ENCODE measurements at regions of chr10 and their contacts with region 1.

Region 1: GRCh38 chr10:84715911-84716310 is 387.5 kb downstream of the CCSER2 start:
- DNase-seq: peak; percentile 61 to 70 (median 64)
- ATAC-seq: peak; percentile 99
- H3K4me3 ChIP-seq: no peak overlapping the region
- H3K27ac ChIP-seq: no peak overlapping the region
- H3K4me1 ChIP-seq: no peaks in the 10 kb centered on the region
- H3K27me3 ChIP-seq: no peaks in the 10 kb centered on the region
- CTCF ChIP-seq: peak; percentile 76 to 88 (median 80)
- EP300 ChIP-seq: no peak
- POLR2A ChIP-seq: no peak
- RAD21 ChIP-seq: peak in 1 of 2 experiments; percentile 56; a peak in 2 of 4 replicates

Region 2: DNA sequence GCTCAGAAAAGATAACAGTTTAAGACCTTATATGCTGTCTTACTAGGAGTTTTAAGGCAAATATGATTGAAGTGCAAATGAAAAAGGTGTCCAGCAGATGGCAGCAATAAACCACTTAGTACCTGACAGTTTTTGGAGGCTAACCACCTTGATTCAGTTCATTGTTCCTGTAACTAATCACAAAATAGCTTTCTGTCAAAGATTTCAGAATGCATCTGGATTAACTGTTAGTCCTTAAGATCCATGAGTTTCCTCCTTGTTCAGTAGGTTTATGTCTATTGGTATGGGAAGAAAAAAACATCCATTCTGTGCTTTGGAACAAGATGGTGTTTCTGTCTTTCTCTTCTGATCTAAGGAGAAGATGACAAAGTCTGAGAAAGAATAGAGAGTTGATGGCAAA is 340.9 kb before region 1 on chr10:
- CTCF ChIA-PET with region 1: no interaction called
- POLR2A ChIA-PET with region 1: no interaction called
- in situ Hi-C with region 1: no loop called
- intact Hi-C with region 1: loop called (anchors 10 kb)
- DNase-seq: peak; percentile 30 to 78 (median 37)
- ATAC-seq: peak; percentile 85
- H3K4me3 ChIP-seq: no peak overlapping the region
- H3K27ac ChIP-seq: no peak overlapping the region
- H3K4me1 ChIP-seq: no peaks in the 10 kb centered on the region
- H3K27me3 ChIP-seq: no peaks in the 10 kb centered on the region
- CTCF ChIP-seq: peak; percentile 59 to 91 (median 70)
- EP300 ChIP-seq: no peak
- POLR2A ChIP-seq: no peak
- RAD21 ChIP-seq: peak; percentile 96

Region 3: DNA sequence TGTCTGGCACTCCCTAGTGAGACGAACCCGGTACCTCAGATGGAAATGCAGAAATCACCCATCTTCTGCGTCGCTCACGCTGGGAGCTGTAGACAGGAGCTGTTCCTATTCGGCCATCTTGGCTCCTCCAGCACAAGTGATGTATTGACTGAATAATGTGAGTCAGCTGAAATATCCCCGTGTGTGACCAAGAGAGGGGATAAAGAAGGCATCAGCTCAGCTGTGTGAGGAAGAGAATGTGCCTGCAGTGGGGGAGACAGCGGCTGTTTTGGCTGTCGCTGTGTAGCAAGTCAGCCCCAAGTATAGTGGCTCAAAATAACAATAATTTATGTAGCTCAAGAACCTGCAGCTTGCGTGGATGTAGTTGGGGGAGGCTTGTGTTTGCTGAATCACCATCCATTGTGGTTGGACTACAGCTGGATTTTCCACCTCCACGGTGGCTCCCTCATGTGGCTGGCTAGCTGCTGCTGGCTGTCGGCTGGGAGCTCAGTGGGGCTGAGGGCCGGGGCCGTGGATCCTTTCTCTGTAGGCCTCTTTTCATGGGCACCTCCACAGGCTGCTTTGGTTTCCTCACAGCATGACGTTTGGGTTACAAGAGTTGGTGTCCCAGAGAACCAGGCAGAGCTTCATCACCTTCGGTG is 47.0 kb after region 1 on chr10:
- CTCF ChIA-PET with region 1: no interaction called
- POLR2A ChIA-PET with region 1: no interaction called
- in situ Hi-C with region 1: no loop called
- intact Hi-C with region 1: no loop called
- DNase-seq: peak in 3 of 4 experiments; percentile 22 to 29 (median 23)
- ATAC-seq: peak; percentile 86
- H3K4me3 ChIP-seq: no peak overlapping the region
- H3K27ac ChIP-seq: no peak overlapping the region
- H3K4me1 ChIP-seq: no peaks in the 10 kb centered on the region
- H3K27me3 ChIP-seq: no peaks in the 10 kb centered on the region
- CTCF ChIP-seq: no peak
- EP300 ChIP-seq: no peak
- POLR2A ChIP-seq: no peak
- RAD21 ChIP-seq: no peak

Measured in K562 (cell line).